ENCODE measurements at regions of chr19 and their contacts with region 1.

Region 1: DNA sequence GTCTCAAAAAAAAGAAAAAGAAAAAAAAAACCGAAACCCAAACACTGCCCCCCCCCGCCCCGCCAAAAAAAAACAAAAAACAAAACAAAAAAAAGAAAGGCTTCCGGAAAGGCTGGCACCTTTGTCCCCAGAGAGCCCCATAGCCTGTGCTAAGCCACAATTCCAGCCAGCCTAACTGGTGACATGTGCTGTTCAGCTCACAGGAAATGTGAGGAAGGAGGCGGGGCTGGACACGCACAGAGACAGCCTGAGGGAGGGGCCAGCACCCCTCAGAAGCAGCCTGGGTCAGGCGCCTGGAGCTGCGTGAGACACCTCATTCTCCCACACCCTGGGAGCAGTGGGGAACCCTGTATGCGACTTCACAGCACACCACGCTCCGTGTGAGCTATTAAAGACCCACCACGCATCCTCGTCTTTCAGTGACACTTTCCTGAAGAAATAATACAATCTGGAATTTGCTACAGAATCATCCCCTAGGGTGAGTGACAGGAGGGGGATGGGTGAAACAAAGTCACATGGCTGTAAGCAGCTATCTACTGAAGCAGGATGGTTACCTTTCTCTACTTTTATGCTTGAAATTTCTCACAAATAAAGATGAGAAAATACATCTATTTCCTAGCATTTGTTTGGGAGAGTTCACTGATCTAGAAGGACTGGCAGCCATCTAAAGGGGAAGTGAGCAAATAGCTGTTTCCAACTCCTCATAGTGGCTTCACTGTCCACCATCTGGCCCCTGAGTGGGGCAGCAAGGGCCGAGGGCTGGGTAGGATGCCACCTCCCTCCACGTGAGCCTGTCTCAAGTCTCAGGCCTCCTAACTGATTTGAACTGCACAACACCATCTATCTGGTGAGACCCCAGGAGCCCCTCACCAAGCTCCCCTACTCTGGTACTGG is 12.3 kb upstream of the SLC35E1 start:
- DNase-seq: peak; percentile 82
- ATAC-seq: peak; percentile 82
- H3K4me3 Mint-ChIP-seq: peak overlapping the region; percentile 86
- H3K27ac Mint-ChIP-seq: peak overlapping the region; percentile 93
- H3K4me1 Mint-ChIP-seq: peaks cover 62% of the 10 kb centered on the region
- H3K27me3 Mint-ChIP-seq: no peaks in the 10 kb centered on the region

Region 2: DNA sequence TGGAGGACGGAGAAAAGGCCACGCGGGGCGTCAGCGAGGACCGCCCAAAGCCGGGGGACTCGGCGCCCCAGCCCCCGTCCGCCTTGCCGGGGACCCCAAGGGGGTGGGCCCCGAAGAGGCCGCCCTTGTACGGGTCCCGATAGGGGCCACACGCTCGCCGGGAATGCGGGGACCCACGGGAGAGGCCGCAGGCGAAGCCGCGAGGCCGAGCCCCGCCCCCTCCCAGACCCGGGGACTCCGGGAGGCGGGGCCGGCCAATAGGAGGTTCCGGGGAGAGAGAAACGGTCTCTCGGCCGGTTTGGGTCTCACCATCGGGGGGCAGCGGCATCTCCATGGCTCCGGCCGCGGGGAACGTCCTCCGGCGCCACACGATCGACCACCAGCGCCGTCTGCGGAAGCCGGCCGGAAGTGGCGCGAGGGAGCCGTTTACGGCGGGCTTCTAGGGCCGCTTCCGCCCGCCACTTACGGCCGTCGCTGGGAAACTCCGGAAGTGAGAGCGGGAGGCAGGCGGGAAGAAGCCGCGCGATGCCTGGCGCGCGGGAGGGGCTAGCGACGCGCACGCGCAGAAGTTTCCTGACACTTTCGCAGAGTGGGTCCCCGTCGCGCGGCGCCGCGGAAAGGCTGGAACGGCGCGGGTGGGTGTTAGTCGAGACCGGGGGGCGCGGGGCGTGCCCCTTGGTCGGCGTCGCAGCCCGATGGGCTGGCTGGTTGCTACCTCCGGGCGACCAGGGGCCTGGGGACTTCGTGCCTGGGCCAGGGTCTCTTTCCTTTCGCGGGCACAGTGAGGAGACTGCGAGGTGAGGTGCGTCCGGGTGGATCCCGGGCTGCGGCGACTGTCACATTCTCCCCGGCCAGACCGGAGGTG is 42.2 kb before region 1 on chr19 and contains the start of gene CHERP:
- POLR2A ChIA-PET with region 1: interaction called, 12 read pairs
- DNase-seq: peak; percentile 95
- ATAC-seq: peak; percentile 87
- H3K4me3 Mint-ChIP-seq: peak within 1 kb of the TSS; percentile 95
- H3K27ac Mint-ChIP-seq: peak within 1 kb of the TSS; percentile 87
- H3K4me1 Mint-ChIP-seq: peaks cover 41% of the 10 kb centered on the region
- H3K27me3 Mint-ChIP-seq: no peaks in the 10 kb centered on the region
- total RNA-seq, gene CHERP: 65.5 to 67.0 TPM

Region 3: GRCh38 chr19:16572332-16573211 is 11.9 kb before region 1 on chr19 and contains the start of gene SLC35E1:
- POLR2A ChIA-PET with region 1: interaction called, 38 read pairs
- DNase-seq: peak; percentile 93
- ATAC-seq: peak; percentile 91
- H3K4me3 Mint-ChIP-seq: peak within 1 kb of the TSS; percentile 98
- H3K27ac Mint-ChIP-seq: peak within 1 kb of the TSS; percentile 99
- H3K4me1 Mint-ChIP-seq: peaks cover 41% of the 10 kb centered on the region
- H3K27me3 Mint-ChIP-seq: no peaks in the 10 kb centered on the region
- total RNA-seq, gene SLC35E1: 43.4 to 44.5 TPM

Region 4: DNA sequence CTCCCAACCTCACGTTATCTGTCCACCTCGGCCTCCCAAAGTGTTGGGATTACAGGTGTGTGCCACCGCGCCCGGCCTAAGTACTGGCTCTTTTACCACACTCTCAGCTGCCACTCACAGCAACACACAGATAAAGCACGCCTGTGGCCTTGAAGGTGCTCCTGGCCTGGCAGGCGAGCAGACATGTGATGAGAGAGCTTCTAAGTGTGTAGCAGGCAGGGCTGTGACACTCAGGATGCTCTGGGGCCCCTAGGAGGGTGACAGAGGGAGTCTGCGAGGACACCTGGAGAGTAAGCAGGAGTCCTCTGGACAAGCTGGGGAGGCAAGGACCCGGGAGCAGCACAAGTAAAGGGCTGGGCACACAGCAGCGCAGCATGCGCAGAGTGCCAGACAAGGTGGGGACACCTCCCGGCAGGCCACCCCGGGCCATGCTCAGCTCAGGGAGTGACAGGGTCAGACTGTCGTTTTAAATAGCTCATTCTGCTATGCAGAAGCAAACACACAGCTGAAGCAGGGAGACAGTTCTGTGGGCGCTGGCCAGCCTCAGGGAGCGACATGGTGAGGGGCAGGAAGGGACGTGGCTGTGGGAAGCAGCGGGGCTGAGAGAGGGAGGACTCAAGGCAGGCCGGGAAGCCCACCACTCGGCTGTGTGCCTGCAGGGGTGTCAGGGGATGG is 17.0 kb after region 1 on chr19:
- POLR2A ChIA-PET with region 1: no interaction called
- DNase-seq: no peak
- ATAC-seq: no peak
- H3K4me3 Mint-ChIP-seq: no peak overlapping the region
- H3K27ac Mint-ChIP-seq: no peak overlapping the region
- H3K4me1 Mint-ChIP-seq: peaks cover 16% of the 10 kb centered on the region
- H3K27me3 Mint-ChIP-seq: no peaks in the 10 kb centered on the region

Region 5: GRCh38 chr19:16714702-16715287 is 130.3 kb after region 1 on chr19:
- POLR2A ChIA-PET with region 1: no interaction called
- DNase-seq: peak; percentile 64
- ATAC-seq: no peak
- H3K4me3 Mint-ChIP-seq: no peak overlapping the region
- H3K27ac Mint-ChIP-seq: no peak overlapping the region
- H3K4me1 Mint-ChIP-seq: no peaks in the 10 kb centered on the region
- H3K27me3 Mint-ChIP-seq: peaks cover 6% of the 10 kb centered on the region

Measured in activated naive CD8-positive, alpha-beta T cell treated with anti-CD3 and anti-CD28 coated beads, Interleukin-2, amount 10 ng/mL, durations not matched to agents 7 days and 5 days (primary cell).